Aorta (tissue), 5 donors: ENCODE measurements at regions of chr20 and their contacts with region 1.

Region 1: DNA sequence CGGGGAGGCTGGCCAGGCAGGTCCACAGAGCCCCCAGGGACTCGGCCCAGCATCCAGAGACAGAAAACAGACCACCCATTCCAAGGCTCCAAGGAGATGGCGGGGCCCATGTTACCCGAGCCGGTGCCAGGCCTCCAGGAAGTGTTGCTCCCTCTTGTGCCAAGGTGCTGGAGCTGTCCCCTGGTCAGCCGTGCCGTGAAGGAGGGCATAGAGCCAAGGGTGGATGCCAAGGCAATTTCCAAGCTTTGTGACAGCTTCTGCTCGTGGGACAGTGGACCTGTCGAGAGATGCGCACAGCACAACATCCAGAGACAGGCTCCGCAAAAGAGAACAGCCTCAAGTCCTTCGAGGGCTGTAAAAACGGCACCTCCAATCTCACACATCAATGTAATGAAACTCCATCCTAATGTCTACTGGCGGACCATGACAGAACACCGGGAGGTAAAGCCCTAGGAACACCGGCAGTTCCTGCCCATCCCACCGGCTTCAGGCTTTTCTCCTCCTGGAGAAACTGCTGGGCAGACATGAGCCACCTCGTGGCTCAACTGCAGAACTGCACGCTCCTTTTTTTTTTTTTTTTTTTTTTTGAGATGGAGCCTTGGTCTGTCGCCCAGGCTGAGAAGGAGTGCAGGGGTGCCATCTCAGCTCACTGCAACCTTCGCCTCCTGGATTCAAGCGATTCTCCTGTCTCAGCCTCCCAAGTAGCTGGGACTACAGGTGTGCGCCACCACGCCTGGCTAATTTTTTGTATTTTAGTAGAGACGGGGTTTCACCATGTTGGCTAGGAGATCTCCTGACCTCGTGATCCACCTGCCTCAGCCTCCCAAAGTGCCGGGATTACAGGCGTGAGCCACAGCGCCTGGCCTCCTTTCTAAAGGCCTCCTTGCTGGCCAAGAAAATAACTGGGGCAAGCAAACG is 30.9 kb upstream of the AVP start:
- DNase-seq: no peak
- ATAC-seq: peak; percentile 64
- H3K4me3 ChIP-seq: no peak overlapping the region
- H3K27ac ChIP-seq: no peak overlapping the region
- H3K4me1 ChIP-seq: no peaks in the 10 kb centered on the region
- H3K27me3 ChIP-seq: no peaks in the 10 kb centered on the region

Region 2: DNA sequence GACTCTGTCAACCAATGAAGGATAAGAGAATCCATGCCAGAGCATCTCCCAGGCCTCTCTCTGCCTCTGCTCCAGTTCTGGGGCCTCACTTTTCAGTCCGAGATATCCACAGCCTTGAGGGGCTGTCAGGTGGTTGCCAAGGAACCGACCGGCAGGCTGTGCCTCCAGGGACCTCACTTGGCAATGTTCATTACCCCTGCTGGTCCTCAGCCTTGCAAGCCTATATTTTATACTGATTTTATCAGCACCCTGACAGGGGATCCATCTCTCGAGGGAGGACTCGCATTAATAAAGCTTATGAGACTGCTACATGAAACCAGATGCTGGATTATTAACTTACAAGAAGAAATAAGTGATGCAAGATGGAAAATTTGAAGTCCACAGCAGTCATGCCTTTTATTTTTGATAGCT is 539.1 kb before region 1 on chr20:
- intact Hi-C with region 1: no loop called
- DNase-seq: no peak
- ATAC-seq: no peak
- H3K4me3 ChIP-seq: no peak overlapping the region
- H3K27ac ChIP-seq: no peak overlapping the region
- H3K4me1 ChIP-seq: no peaks in the 10 kb centered on the region
- H3K27me3 ChIP-seq: no peaks in the 10 kb centered on the region

Region 3: DNA sequence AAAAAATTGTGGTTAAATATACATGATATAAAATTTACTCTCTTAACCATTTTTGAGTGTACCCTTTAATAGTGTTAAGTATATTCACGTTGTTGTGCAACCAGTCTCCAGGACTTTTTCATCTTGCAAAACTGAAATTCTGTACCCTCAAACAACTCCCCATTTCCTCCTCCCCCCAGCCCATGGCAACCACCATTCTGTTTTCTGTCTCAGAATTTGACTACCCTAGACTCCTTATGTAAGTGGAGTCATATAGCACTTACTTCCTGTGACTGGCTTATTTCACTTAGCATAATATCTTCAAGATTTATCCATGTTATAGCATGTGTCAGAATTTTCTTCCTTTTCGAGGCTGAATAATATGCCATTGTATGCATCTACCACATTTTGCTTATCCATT is 269.8 kb before region 1 on chr20:
- intact Hi-C with region 1: no loop called
- DNase-seq: no peak
- ATAC-seq: no peak
- H3K4me3 ChIP-seq: no peak overlapping the region
- H3K27ac ChIP-seq: no peak overlapping the region
- H3K4me1 ChIP-seq: no peaks in the 10 kb centered on the region
- H3K27me3 ChIP-seq: no peaks in the 10 kb centered on the region

Region 4: DNA sequence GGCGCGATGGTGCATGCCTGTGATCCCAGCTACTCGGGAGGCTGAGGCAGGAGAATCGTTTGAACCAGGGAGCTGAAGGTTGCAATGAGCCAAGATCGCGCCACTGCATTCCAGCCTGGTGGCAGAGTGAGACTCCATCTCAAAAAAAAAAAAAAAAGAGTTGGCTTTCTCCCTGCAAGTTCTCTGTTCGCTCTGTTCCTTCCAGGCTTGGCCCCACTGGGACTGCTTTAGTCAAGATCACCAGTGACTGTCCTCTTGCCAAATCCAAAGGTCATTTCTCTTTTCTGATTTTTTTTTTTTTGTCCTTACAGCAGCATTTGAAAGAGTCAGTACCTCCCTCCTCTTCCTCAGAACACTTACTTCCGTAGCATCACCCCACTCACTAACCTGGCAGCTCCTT is 82.8 kb before region 1 on chr20:
- intact Hi-C with region 1: no loop called
- DNase-seq: no peak
- ATAC-seq: peak; percentile 48
- H3K4me3 ChIP-seq: no peak overlapping the region
- H3K27ac ChIP-seq: no peak overlapping the region
- H3K4me1 ChIP-seq: no peaks in the 10 kb centered on the region
- H3K27me3 ChIP-seq: no peaks in the 10 kb centered on the region

Region 5: DNA sequence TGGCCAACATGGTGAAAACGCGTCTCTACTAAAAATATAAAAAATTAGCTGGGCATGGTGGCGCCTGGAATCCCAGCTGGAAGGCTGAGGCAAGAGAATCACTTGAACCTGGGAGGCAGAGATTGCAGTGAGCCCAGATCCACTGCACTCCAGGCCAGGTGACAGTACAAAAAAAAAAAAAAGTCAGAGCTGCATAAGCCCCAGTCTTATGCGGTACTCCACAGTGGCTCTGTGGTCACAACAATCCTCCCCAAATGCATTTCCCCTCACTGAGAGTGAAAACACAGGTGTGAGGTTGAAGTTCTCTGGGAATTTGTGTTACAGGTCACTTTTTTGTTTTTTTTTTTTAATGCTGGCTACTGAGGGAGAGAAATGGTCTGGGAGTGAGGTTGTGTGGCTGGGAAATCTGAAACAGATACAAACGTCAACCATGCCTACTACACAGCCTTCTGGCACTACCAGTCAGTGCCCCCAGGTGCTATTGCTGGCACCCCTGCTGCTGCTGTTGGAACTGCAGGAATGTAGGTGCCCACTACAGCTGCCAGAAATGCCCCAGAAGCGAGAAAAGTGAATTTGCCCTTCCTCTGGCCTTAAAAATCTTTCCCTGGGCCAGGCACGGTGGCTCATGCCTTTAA is 63.9 kb before region 1 on chr20:
- intact Hi-C with region 1: loop called (anchors 5 kb)
- DNase-seq: no peak
- ATAC-seq: no peak
- H3K4me3 ChIP-seq: no peak overlapping the region
- H3K27ac ChIP-seq: no peak overlapping the region
- H3K4me1 ChIP-seq: no peaks in the 10 kb centered on the region
- H3K27me3 ChIP-seq: no peaks in the 10 kb centered on the region